ENCODE measurements at regions of chr7 and their contacts with region 1.

Region 1: GRCh38 chr7:143416565-143417149 is 8.0 kb upstream of the EPHA1 start:
- DNase-seq: no peak
- H3K4me3 ChIP-seq: no peak overlapping the region
- H3K27ac ChIP-seq: no peak overlapping the region
- H3K4me1 ChIP-seq: peaks cover 0 to 8% (median 0%) of the 10 kb centered on the region in 4 donors
- H3K27me3 ChIP-seq: no peaks in the 10 kb centered on the region
- CTCF ChIP-seq: peak; percentile 33 to 70 (median 62)
- EP300 ChIP-seq: no peak
- POLR2A ChIP-seq: no peak

Region 2: DNA sequence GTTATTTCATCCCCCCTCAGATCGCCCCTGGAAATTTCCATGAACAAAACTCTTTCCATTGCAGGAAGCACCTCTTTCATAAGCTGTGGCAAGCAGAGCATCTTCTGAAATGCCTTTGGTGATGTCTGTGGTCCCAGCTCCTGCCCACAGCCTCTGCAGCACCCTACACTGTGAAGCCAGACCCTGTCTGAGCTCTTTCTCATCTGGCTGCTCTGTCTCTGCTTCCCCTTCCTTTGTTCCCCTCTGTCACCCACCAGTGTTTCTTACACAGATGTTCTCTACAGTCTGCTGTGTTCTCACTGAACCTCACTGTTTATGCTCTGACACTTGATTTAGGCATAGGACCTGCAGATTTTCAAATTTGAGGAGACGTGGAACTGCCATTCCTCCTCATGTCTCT is 235.3 kb before region 1 on chr7:
- intact Hi-C with region 1: no loop called
- DNase-seq: no peak
- H3K4me3 ChIP-seq: no peak overlapping the region
- H3K27ac ChIP-seq: no peak overlapping the region
- H3K4me1 ChIP-seq: no peaks in the 10 kb centered on the region
- H3K27me3 ChIP-seq: no peaks in the 10 kb centered on the region
- CTCF ChIP-seq: no peak
- EP300 ChIP-seq: no peak
- POLR2A ChIP-seq: no peak

Region 3: DNA sequence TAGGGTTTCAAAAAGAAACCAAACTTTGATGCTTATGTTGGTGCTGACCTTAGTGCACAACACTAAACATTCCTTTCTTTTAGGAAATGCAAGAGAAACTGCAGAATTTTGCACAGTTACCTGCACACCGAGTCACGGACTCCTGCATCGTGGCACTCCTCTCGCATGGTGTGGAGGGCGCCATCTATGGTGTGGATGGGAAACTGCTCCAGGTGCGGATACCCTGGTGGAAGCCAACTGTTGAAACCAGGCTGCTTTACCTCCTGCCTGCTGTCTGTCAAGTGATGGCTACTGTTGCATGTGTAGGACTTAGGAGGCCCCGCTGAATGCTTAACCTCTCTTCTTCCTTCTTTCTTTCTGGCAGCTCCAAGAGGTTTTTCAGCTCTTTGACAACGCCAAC is 116.8 kb before region 1 on chr7:
- intact Hi-C with region 1: loop called (anchors 5 kb)
- DNase-seq: no peak
- H3K4me3 ChIP-seq: no peak overlapping the region
- H3K27ac ChIP-seq: no peak overlapping the region
- H3K4me1 ChIP-seq: no peaks in the 10 kb centered on the region
- H3K27me3 ChIP-seq: no peaks in the 10 kb centered on the region
- CTCF ChIP-seq: peak in 2 of 4 experiments; percentile 26 to 51
- EP300 ChIP-seq: no peak
- POLR2A ChIP-seq: no peak

Measured in sigmoid colon (tissue), 7 donors.